ENCODE measurements at regions of chr15 and their contacts with region 1.

Region 1: GRCh38 chr15:29774900-29775299 is 47.4 kb downstream of the TJP1 start:
- DNase-seq: peak; percentile 10
- ATAC-seq: no peak
- H3K4me3 ChIP-seq: no peak overlapping the region
- H3K27ac ChIP-seq: no peak overlapping the region; the same call in 1 of the 2 replicates
- H3K4me1 ChIP-seq: no peaks in the 10 kb centered on the region; the same call in 1 of the 2 replicates
- H3K27me3 ChIP-seq: no peaks in the 10 kb centered on the region
- CTCF ChIP-seq: no peak

Region 2: GRCh38 chr15:29815000-29815710 is 40.3 kb after region 1 on chr15:
- CTCF ChIA-PET with region 1: interaction called, 5 read pairs
- POLR2A ChIA-PET with region 1: no interaction called
- in situ Hi-C with region 1: no loop called
- intact Hi-C with region 1: loop called (anchors 5 kb)
- DNase-seq: no peak
- ATAC-seq: peak; percentile 88
- H3K4me3 ChIP-seq: no peak overlapping the region
- H3K27ac ChIP-seq: peak overlapping the region; percentile 14; the same call in 1 of the 2 replicates
- H3K4me1 ChIP-seq: peaks cover 51% of the 10 kb centered on the region
- H3K27me3 ChIP-seq: no peaks in the 10 kb centered on the region
- CTCF ChIP-seq: no peak

Region 3: GRCh38 chr15:29825227-29825626 is 50.3 kb after region 1 on chr15:
- CTCF ChIA-PET with region 1: no interaction called
- POLR2A ChIA-PET with region 1: no interaction called
- in situ Hi-C with region 1: no loop called
- intact Hi-C with region 1: loop called (anchors 5 kb)
- DNase-seq: no peak
- ATAC-seq: no peak
- H3K4me3 ChIP-seq: no peak overlapping the region
- H3K27ac ChIP-seq: no peak overlapping the region
- H3K4me1 ChIP-seq: peaks cover 10% of the 10 kb centered on the region
- H3K27me3 ChIP-seq: no peaks in the 10 kb centered on the region
- CTCF ChIP-seq: no peak

Region 4: GRCh38 chr15:30065025-30065801 is 290.3 kb after region 1 on chr15:
- CTCF ChIA-PET with region 1: no interaction called
- POLR2A ChIA-PET with region 1: no interaction called
- in situ Hi-C with region 1: no loop called
- intact Hi-C with region 1: no loop called
- DNase-seq: no peak
- ATAC-seq: no peak
- H3K4me3 ChIP-seq: no peak overlapping the region
- H3K27ac ChIP-seq: no peak overlapping the region
- H3K4me1 ChIP-seq: no peaks in the 10 kb centered on the region
- H3K27me3 ChIP-seq: no peaks in the 10 kb centered on the region
- CTCF ChIP-seq: no peak

Measured in Panc1 (cell line).